ENCODE measurements at regions of chr2 and their contacts with region 1.

Region 1: GRCh38 chr2:52416340-52416739 is 1351.3 kb upstream of the CHAC2 start:
- DNase-seq: no peak
- H3K4me3 ChIP-seq: no peak overlapping the region
- H3K27ac ChIP-seq: no peak overlapping the region
- H3K4me1 ChIP-seq: no peaks in the 10 kb centered on the region
- H3K27me3 ChIP-seq: no peaks in the 10 kb centered on the region
- CTCF ChIP-seq: peak; percentile 52; the same call in 1 of the 2 replicates

Region 2: DNA sequence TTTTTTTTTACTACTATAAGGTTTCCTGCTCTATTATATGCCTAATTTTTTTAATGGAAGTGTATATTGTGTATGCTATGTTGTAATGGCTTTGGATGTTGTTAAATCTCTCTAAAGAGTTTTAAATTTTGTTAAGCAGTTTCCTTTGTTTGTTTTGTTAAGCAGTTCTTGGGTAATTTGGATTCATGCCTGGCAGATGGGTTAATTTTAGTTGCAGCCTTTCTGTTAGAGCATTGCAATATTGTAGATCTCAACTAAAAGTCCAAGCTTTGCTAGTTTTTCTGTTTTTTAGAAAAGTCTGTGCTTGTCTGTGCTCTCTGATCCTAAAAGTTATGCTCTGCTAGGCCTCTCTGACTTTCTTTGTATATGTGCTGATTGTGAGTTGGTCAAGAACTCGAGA is 155.4 kb before region 1 on chr2:
- CTCF ChIA-PET with region 1: no interaction called
- POLR2A ChIA-PET with region 1: no interaction called
- intact Hi-C with region 1: no loop called
- DNase-seq: no peak
- H3K4me3 ChIP-seq: no peak overlapping the region
- H3K27ac ChIP-seq: no peak overlapping the region
- H3K4me1 ChIP-seq: no peaks in the 10 kb centered on the region
- H3K27me3 ChIP-seq: no peaks in the 10 kb centered on the region
- CTCF ChIP-seq: no peak

Region 3: DNA sequence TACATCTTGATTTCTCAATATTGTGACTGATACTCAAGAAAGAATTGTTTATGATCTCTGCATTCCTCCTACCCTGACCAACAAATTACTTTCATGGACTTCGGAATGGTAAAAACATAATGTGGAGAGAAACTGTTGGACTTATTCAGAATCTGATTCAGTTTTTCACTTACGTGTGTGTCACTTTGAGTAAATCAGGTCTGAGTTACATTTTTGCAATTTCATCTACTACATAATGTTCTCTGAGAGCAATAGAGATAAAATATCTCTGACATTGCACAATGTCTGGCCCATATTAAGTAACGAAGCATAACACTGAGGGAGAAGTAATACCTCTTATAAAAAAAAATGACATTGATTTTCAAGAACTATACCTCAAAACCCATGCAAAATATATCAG is 13.4 kb after region 1 on chr2:
- CTCF ChIA-PET with region 1: no interaction called
- POLR2A ChIA-PET with region 1: interaction called, 54 read pairs
- intact Hi-C with region 1: no loop called
- DNase-seq: no peak
- H3K4me3 ChIP-seq: no peak overlapping the region
- H3K27ac ChIP-seq: no peak overlapping the region
- H3K4me1 ChIP-seq: no peaks in the 10 kb centered on the region
- H3K27me3 ChIP-seq: no peaks in the 10 kb centered on the region
- CTCF ChIP-seq: no peak

Region 4: GRCh38 chr2:52976253-52976949 is 560.1 kb after region 1 on chr2:
- CTCF ChIA-PET with region 1: no interaction called
- POLR2A ChIA-PET with region 1: no interaction called
- intact Hi-C with region 1: loop called (anchors 10 kb)
- DNase-seq: peak; percentile 23 to 38
- H3K4me3 ChIP-seq: no peak overlapping the region
- H3K27ac ChIP-seq: no peak overlapping the region
- H3K4me1 ChIP-seq: no peaks in the 10 kb centered on the region
- H3K27me3 ChIP-seq: no peaks in the 10 kb centered on the region
- CTCF ChIP-seq: peak; percentile 85

Region 5: DNA sequence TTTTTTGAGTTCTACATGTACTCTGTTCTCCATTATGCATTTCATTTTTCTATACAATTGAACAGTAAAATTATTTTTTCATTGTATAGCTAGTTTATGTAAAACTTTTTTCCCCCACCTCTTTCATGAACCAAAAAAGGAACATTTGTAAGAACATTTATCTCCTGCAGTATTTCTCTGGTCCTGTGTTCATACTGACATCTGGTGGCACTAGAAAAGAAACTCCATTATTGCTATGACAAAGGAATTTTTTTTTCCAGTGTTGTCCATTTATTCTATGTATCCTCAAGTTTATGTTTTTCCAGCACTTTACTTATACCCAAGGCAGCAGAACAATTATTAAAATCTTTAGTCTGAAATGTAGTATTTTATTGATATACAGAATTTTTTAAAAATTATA is 1323.8 kb after region 1 on chr2:
- CTCF ChIA-PET with region 1: no interaction called
- POLR2A ChIA-PET with region 1: no interaction called
- intact Hi-C with region 1: loop called (anchors 5 kb)
- DNase-seq: peak in 1 of 2 experiments; percentile 46
- H3K4me3 ChIP-seq: no peak overlapping the region
- H3K27ac ChIP-seq: no peak overlapping the region
- H3K4me1 ChIP-seq: no peaks in the 10 kb centered on the region
- H3K27me3 ChIP-seq: no peaks in the 10 kb centered on the region
- CTCF ChIP-seq: peak; percentile 75

Measured in PC-9 (cell line).